ENCODE measurements at regions of chr19 and their contacts with region 1.

Region 1: GRCh38 chr19:57682226-57682766 is 519 bp downstream of the ZNF551 start:
- H3K4me3 ChIP-seq: peak overlapping the region; percentile 92
- H3K27ac ChIP-seq: peak overlapping the region; percentile 26; the same call in 1 of the 2 replicates
- H3K4me1 ChIP-seq: no peaks in the 10 kb centered on the region
- CTCF ChIP-seq: no peak

Region 2: GRCh38 chr19:57632987-57633831 is 49.1 kb before region 1 on chr19 and contains the start of gene ZNF211:
- CTCF ChIA-PET with region 1: no interaction called
- POLR2A ChIA-PET with region 1: interaction called, 10 read pairs
- H3K4me3 ChIP-seq: peak within 1 kb of the TSS; percentile 80
- H3K27ac ChIP-seq: no peak within 1 kb of the TSS; the same call in 1 of the 2 replicates
- H3K4me1 ChIP-seq: 0 out of 2 replicates have a peak, but pooled peaks cover 2% of the 10 kb centered on the region
- CTCF ChIP-seq: no peak

Region 3: DNA sequence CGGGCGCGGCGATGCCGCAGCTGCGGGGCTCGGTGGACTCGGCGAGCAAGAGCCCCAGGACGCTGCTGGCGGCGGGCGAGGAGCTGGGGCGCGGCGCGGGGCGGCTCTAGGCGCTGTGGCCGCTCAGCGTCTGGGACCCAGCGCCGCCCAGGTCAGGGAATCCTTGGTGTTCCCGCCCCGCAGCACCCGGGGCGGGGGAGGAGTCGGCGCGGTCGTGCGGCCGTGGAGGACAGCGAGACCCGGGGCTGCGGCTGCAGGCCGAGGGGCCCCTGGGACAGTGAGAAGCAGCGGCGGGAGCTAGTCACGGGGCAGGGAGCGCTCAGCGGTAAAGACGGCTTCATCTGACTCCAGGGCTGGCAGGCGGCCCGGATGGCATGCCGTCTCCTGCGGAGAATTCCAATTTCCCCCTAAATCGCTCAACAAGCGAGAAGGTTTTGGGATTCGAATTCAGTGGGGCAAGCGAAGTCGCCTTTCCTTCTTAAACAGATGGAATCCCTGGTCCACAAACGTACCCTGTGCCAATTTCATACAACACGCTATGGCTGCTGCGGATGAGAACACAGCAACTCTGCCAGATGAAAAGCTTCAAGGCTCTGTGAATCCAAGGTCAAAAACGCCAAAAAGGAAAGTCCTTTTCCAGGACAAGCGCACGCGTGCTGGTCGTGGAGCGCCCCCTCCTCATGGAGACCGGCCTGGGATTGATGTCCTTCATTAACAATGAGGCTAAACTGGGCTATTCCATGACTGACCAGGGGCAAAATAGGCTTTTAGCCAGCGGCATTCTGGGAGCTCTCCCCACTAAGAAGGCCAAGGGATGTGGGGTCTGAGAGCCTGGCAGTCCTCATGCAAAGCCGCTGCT is 17.8 kb before region 1 on chr19:
- CTCF ChIA-PET with region 1: interaction called, 3 read pairs
- POLR2A ChIA-PET with region 1: interaction called, 16 read pairs
- H3K4me3 ChIP-seq: peak overlapping the region; percentile 52
- H3K27ac ChIP-seq: no peak overlapping the region; the same call in 1 of the 2 replicates
- H3K4me1 ChIP-seq: no peaks in the 10 kb centered on the region
- CTCF ChIP-seq: no peak

Region 4: GRCh38 chr19:57769345-57770131 is 87.2 kb after region 1 on chr19 and contains the start of gene ZNF586:
- CTCF ChIA-PET with region 1: no interaction called
- POLR2A ChIA-PET with region 1: interaction called, 12 read pairs
- H3K4me3 ChIP-seq: peak within 1 kb of the TSS; percentile 63
- H3K27ac ChIP-seq: peak within 1 kb of the TSS; percentile 60; the same call in 1 of the 2 replicates
- H3K4me1 ChIP-seq: no peaks in the 10 kb centered on the region
- CTCF ChIP-seq: no peak

Measured in HEK293 (cell line).